Activated T-helper 1 cell treated with anti-CD3 and anti-CD28 coated beads, Interleukin-12 subunit alpha, Interleukin-12 subunit beta, Interleukin-2, Interleukin-4 antibody, amounts not matched to agents 30 ng/mL and 10 ng/mL and 1 ng/mL, durations not matched to agents 14 hours and 24 hours and 36 hours (primary cell): ENCODE measurements at regions of chr11 and their contacts with region 1.

Region 1: DNA sequence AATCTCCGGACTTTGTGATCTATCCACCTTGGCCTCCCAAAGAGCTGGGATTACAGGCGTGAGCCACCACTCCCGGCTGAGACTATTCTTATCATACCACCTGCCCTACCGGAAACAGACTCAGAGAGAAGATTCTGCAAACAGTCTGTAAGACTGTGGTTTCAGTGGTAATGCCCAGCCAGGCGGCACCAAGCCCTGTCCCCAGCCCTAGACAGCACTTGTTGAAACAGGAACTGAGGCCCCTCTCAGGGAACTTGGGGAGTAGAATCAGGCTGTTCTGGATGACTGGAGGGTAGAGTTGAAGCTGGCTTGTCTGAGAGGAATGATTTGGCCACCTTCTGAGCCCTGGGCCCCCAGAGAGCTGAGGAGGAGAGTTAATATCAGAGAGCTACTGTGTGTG is 1.3 kb upstream of the INSC start:
- DNase-seq: no peak
- H3K4me3 Mint-ChIP-seq: peak overlapping the region; percentile 48
- H3K27ac Mint-ChIP-seq: peak overlapping the region; percentile 15
- H3K4me1 Mint-ChIP-seq: peaks cover 49% of the 10 kb centered on the region
- H3K27me3 Mint-ChIP-seq: peaks cover 10% of the 10 kb centered on the region

Region 2: GRCh38 chr11:14529933-14530332 is 583.4 kb before region 1 on chr11:
- intact Hi-C with region 1: no loop called
- DNase-seq: no peak
- H3K4me3 Mint-ChIP-seq: no peak overlapping the region
- H3K27ac Mint-ChIP-seq: no peak overlapping the region
- H3K4me1 Mint-ChIP-seq: no peaks in the 10 kb centered on the region
- H3K27me3 Mint-ChIP-seq: no peaks in the 10 kb centered on the region

Region 3: DNA sequence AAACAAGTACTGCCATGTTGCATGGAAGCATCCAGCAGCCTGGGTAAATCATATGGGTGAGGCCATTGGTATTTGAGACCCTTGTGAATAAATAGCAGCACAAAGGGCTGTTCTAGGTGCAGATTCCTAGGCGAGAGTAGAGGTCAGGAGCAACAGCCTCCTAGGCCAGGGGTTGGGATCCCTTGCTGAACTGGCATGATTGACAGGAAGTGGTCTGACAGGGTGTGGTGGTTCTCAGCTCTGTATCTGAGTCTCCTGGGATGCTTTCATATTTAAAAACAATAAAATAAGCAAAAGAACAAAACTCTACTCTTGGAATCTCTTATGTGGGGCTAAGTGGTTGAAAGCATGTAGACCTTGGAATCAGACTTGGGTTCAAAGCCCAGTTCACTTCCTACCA is 37.1 kb after region 1 on chr11:
- intact Hi-C with region 1: loop called (anchors 5 kb)
- DNase-seq: no peak
- H3K4me3 Mint-ChIP-seq: no peak overlapping the region
- H3K27ac Mint-ChIP-seq: no peak overlapping the region
- H3K4me1 Mint-ChIP-seq: peaks cover 32% of the 10 kb centered on the region
- H3K27me3 Mint-ChIP-seq: peaks cover 3% of the 10 kb centered on the region